Spleen (tissue), 13 donors: ENCODE measurements at regions of chr4 and their contacts with region 1.

Region 1: GRCh38 chr4:70839589-70840093 is at the start of gene GRSF1:
- DNase-seq: peak; percentile 99
- H3K4me3 ChIP-seq: peak within 1 kb of the TSS; percentile 51 to 99 (median 84)
- H3K27ac ChIP-seq: peak within 1 kb of the TSS; percentile 80 to 97 (median 94)
- H3K4me1 ChIP-seq: peaks cover 14 to 51% (median 33%) of the 10 kb centered on the region in 6 donors
- H3K27me3 ChIP-seq: no peaks in the 10 kb centered on the region
- CTCF ChIP-seq: peak in 1 of 11 experiments; percentile 26
- POLR2A ChIP-seq: peak in 1 of 3 donors; percentile 20
- total RNA-seq, gene GRSF1: 38.5 to 48.2 (median 40.2) TPM

Region 2: GRCh38 chr4:70704331-70705145 is 135.1 kb before region 1 on chr4:
- intact Hi-C with region 1: loop called (anchors 10 kb)
- DNase-seq: peak; percentile 95
- H3K4me3 ChIP-seq: peak overlapping the region; percentile 65 to 96 (median 76)
- H3K27ac ChIP-seq: peak overlapping the region; percentile 88 to 96 (median 94)
- H3K4me1 ChIP-seq: peaks cover 18 to 56% (median 32%) of the 10 kb centered on the region in 6 donors
- H3K27me3 ChIP-seq: no peaks in the 10 kb centered on the region
- CTCF ChIP-seq: peak in 9 of 11 experiments; percentile 7 to 68 (median 58)
- POLR2A ChIP-seq: no peak

Region 3: DNA sequence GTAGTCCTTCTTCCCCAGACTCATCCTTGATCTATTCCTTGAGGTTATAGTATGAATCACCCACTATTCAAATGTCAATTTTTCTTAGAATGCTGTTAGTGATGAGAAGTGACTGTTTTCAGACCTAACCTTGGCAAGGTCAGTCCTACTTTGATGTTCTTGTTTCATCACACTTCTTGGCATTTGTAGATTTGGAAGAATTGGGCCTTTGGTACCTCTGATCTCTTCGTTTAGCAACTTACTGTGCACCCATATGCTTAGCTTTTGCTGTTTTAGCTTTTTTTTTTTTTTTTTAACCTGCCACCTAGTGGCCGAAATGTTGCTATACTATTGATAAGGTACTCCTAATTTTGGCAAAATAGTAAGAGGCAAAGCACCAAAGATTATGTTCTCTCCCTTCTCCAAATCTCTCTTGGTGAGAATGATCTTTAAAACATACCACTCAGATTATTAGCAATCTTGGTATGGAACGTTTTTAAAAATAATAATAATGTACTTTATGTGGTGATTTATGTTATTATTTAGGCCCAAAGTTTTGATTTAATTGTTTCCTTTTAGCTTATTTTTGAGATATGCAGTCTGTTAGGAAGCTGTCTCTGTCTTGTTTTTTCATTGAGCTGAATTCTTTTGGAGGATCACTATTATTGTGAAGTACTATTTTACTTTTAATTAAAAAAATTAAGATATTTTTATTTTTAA is 170.4 kb after region 1 on chr4:
- intact Hi-C with region 1: loop called (anchors 10 kb)
- DNase-seq: no peak
- H3K4me3 ChIP-seq: no peak overlapping the region
- H3K27ac ChIP-seq: peak overlapping the region in 2 of 8 donors; percentile 12 to 14
- H3K4me1 ChIP-seq: peaks cover 12 to 63% (median 38%) of the 10 kb centered on the region in 6 donors
- H3K27me3 ChIP-seq: no peaks in the 10 kb centered on the region
- CTCF ChIP-seq: peak; percentile 45 to 79 (median 69)
- POLR2A ChIP-seq: no peak